HepG2 (cell line): ENCODE measurements at regions of chr17 and their contacts with region 1.

Region 1: GRCh38 chr17:30173649-30174048 is 57.0 kb downstream of the NSRP1 start:
- DNase-seq: no peak
- ATAC-seq: no peak
- H3K4me3 ChIP-seq: no peak overlapping the region
- H3K27ac ChIP-seq: no peak overlapping the region
- H3K4me1 ChIP-seq: no peaks in the 10 kb centered on the region
- H3K27me3 ChIP-seq: no peaks in the 10 kb centered on the region
- CTCF ChIP-seq: no peak
- EP300 ChIP-seq: no peak
- POLR2A ChIP-seq: no peak
- RAD21 ChIP-seq: no peak

Region 2: DNA sequence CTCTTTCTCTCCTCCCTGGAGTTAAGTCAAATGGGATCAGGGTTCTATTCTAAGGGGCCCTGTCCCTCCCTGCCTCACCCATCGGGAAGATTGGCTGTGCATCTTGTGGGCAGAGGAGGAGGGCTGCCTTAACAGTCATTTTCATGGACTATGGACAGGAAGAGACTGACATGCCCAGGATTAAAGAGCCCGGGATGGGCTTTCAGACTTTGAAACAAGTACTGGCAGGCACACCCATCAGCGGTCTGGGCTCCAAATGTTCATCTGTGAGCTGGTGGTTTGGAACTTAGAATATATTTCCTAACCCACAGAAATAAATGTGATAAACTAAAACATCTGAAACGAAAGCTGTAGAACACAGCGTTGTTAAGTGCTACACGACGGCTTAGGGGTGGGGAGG is 55.4 kb after region 1 on chr17:
- CTCF ChIA-PET with region 1: no interaction called
- POLR2A ChIA-PET with region 1: interaction called, 3 read pairs
- in situ Hi-C with region 1: no loop called
- intact Hi-C with region 1: loop called (anchors 10 kb)
- DNase-seq: peak; percentile 34
- ATAC-seq: peak; percentile 15; the same call in 2 of the 3 replicates
- H3K4me3 ChIP-seq: peak overlapping the region in 1 of 3 experiments; percentile 12; a peak in 2 of 6 replicates
- H3K27ac ChIP-seq: no peak overlapping the region
- H3K4me1 ChIP-seq: peaks cover 76% of the 10 kb centered on the region
- H3K27me3 ChIP-seq: no peaks in the 10 kb centered on the region
- CTCF ChIP-seq: no peak
- EP300 ChIP-seq: no peak
- POLR2A ChIP-seq: no peak
- RAD21 ChIP-seq: no peak